ENCODE measurements at regions of chr16 and their contacts with region 1.

Region 1: GRCh38 chr16:56513972-56514371 is 5.9 kb downstream of the BBS2 start:
- H3K4me3 ChIP-seq: no peak overlapping the region
- H3K27ac ChIP-seq: no peak overlapping the region
- H3K4me1 ChIP-seq: 0 out of 2 replicates have a peak, but pooled peaks cover 2% of the 10 kb centered on the region
- CTCF ChIP-seq: peak; percentile 76; the same call in 1 of the 2 replicates

Region 2: GRCh38 chr16:56493126-56493525 is 20.8 kb before region 1 on chr16:
- CTCF ChIA-PET with region 1: interaction called, 10 read pairs
- POLR2A ChIA-PET with region 1: no interaction called
- H3K4me3 ChIP-seq: no peak overlapping the region
- H3K27ac ChIP-seq: no peak overlapping the region
- H3K4me1 ChIP-seq: no peaks in the 10 kb centered on the region
- CTCF ChIP-seq: no peak

Measured in HEK293 (cell line).